ENCODE measurements at regions of chr5 and their contacts with region 1.

Region 1: DNA sequence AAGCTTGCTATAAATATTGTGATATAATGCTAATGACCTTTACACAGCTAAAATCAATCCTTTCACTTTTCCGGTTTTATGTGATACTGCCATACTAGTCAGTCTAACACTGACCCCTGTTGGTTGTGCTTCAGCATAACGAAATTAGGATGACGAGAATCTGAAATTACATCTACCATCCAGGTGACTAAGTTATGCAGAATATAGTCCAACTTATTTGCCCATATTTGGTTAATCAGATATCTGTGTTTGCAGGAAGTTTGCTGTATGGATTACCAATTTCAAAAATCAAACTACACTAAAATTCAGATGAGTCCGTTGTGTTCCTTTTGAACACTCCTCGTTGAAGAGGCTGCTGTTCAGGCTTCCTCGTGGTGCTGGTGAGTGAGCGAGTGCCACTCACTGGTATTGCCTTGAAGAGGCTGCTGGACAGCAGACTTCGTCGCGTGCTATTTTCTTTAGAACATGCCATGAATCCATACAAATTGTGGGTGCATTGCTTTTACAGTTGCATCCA is 32.5 kb downstream of the TENT4A start:
- DNase-seq: no peak
- ATAC-seq: peak; percentile 75
- H3K4me3 ChIP-seq: no peak overlapping the region
- H3K27ac ChIP-seq: no peak overlapping the region
- H3K4me1 ChIP-seq: no peaks in the 10 kb centered on the region
- H3K27me3 ChIP-seq: no peaks in the 10 kb centered on the region
- CTCF ChIP-seq: peak; percentile 74

Region 2: DNA sequence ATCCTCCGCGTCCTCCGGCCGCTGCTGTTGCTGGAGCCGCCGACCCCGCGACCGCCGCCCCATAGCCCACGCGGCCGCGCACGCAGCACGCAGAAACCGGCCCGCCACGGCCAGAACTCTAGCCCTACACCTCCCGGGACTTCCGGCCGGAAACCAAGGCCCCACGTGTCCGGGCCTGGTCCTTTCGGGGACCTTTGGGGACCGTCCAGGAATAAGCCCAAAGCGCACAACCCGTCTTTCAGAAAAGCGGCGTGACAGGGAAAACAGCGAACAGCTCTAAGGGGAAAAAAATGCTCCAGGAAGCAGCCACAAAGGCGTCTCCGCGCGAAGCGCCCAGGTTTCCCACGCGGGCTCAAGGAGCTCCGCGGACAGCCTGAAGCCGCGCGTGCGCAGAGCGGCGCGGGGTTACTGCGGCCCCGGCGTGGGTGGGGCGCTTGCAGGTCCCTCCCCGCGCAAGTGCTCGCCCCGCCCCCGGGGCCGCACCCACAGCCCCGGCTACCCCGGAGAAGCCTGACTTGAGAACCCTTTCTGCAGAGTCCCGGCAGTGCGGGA is 112.8 kb before region 1 on chr5 and contains the starts of genes NSUN2 and SRD5A1:
- intact Hi-C with region 1: loop called (anchors 10 kb)
- DNase-seq: peak; percentile 97
- ATAC-seq: peak; percentile 96
- H3K4me3 ChIP-seq: peak within 1 kb of the TSS; percentile 95
- H3K27ac ChIP-seq: peak within 1 kb of the TSS; percentile 96
- H3K4me1 ChIP-seq: peaks cover 24% of the 10 kb centered on the region
- H3K27me3 ChIP-seq: no peaks in the 10 kb centered on the region
- CTCF ChIP-seq: no peak
- total RNA-seq, gene NSUN2: 46.4 TPM
- total RNA-seq, gene SRD5A1: 8.0 TPM